Gastrocnemius medialis (tissue), 4 donors: ENCODE measurements at regions of chr11 and their contacts with region 1.

Region 1: DNA sequence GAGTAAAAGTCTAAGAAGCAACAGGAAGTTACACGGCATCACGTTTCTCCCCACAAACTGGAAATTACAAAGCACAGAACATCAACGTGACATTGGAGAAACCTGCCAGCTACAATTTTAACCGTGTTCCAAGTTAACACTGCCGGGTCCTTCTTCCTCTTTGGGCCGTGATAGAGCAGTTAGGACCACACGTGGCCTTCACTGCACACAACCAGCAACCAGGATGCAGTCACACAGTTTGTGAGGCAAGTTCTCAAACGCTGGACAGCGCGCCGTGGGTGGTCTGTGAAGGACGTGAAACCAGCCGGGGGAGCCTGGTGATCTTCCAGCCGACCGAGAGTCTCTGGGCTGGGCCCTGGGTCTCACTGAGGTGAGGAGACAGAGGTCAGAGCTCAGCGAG is 14.6 kb downstream of the C11orf21 start:
- DNase-seq: no peak
- ATAC-seq: no peak
- H3K4me3 ChIP-seq: no peak overlapping the region
- H3K27ac ChIP-seq: no peak overlapping the region
- H3K4me1 ChIP-seq: no peaks in the 10 kb centered on the region
- H3K27me3 ChIP-seq: peaks cover 0 to 22% (median 22%) of the 10 kb centered on the region in 3 donors
- CTCF ChIP-seq: no peak
- POLR2A ChIP-seq: no peak

Region 2: GRCh38 chr11:1852877-1853276 is 434.2 kb before region 1 on chr11 and contains the start of gene LSP1:
- in situ Hi-C with region 1: no loop called
- intact Hi-C with region 1: no loop called
- DNase-seq: no peak
- ATAC-seq: no peak
- H3K4me3 ChIP-seq: peak within 1 kb of the TSS in 1 of 4 donors; percentile 1
- H3K27ac ChIP-seq: peak within 1 kb of the TSS in 1 of 4 donors; percentile 80
- H3K4me1 ChIP-seq: peaks cover 0 to 6% of the 10 kb centered on the region in 2 donors
- H3K27me3 ChIP-seq: no peaks in the 10 kb centered on the region
- CTCF ChIP-seq: no peak
- POLR2A ChIP-seq: no peak
- total RNA-seq, gene LSP1: 3.0 to 13.5 (median 5.5) TPM

Region 3: GRCh38 chr11:2252018-2252417 is 35.1 kb before region 1 on chr11:
- in situ Hi-C with region 1: no loop called
- intact Hi-C with region 1: loop called (anchors 1 kb)
- DNase-seq: no peak
- ATAC-seq: no peak
- H3K4me3 ChIP-seq: no peak overlapping the region
- H3K27ac ChIP-seq: no peak overlapping the region
- H3K4me1 ChIP-seq: no peaks in the 10 kb centered on the region
- H3K27me3 ChIP-seq: peaks cover 0 to 7% (median 4%) of the 10 kb centered on the region in 3 donors
- CTCF ChIP-seq: no peak
- POLR2A ChIP-seq: no peak

Region 4: GRCh38 chr11:2677127-2677526 is 390.0 kb after region 1 on chr11:
- in situ Hi-C with region 1: no loop called
- intact Hi-C with region 1: no loop called
- DNase-seq: no peak
- ATAC-seq: no peak
- H3K4me3 ChIP-seq: no peak overlapping the region
- H3K27ac ChIP-seq: no peak overlapping the region
- H3K4me1 ChIP-seq: peaks cover 0 to 4% of the 10 kb centered on the region in 2 donors
- H3K27me3 ChIP-seq: no peaks in the 10 kb centered on the region
- CTCF ChIP-seq: no peak
- POLR2A ChIP-seq: no peak

Region 5: GRCh38 chr11:3153291-3153861 is 866.3 kb after region 1 on chr11:
- in situ Hi-C with region 1: no loop called
- intact Hi-C with region 1: no loop called
- DNase-seq: peak in 1 of 2 donors; percentile 46
- ATAC-seq: peak; percentile 40 to 45
- H3K4me3 ChIP-seq: no peak overlapping the region
- H3K27ac ChIP-seq: peak overlapping the region; percentile 46 to 69 (median 62)
- H3K4me1 ChIP-seq: peaks cover 33 to 42% of the 10 kb centered on the region in 2 donors
- H3K27me3 ChIP-seq: no peaks in the 10 kb centered on the region
- CTCF ChIP-seq: no peak
- POLR2A ChIP-seq: no peak